Heart right ventricle (tissue), 16 donors: ENCODE measurements at regions of chr9 and their contacts with region 1.

Region 1: GRCh38 chr9:70772601-70773000 is 348.8 kb downstream of the TRPM3 start:
- DNase-seq: no peak
- ATAC-seq: no peak
- H3K4me3 ChIP-seq: no peak overlapping the region
- H3K27ac ChIP-seq: no peak overlapping the region
- H3K4me1 ChIP-seq: no peaks in the 10 kb centered on the region
- H3K27me3 ChIP-seq: no peaks in the 10 kb centered on the region
- CTCF ChIP-seq: no peak

Region 2: DNA sequence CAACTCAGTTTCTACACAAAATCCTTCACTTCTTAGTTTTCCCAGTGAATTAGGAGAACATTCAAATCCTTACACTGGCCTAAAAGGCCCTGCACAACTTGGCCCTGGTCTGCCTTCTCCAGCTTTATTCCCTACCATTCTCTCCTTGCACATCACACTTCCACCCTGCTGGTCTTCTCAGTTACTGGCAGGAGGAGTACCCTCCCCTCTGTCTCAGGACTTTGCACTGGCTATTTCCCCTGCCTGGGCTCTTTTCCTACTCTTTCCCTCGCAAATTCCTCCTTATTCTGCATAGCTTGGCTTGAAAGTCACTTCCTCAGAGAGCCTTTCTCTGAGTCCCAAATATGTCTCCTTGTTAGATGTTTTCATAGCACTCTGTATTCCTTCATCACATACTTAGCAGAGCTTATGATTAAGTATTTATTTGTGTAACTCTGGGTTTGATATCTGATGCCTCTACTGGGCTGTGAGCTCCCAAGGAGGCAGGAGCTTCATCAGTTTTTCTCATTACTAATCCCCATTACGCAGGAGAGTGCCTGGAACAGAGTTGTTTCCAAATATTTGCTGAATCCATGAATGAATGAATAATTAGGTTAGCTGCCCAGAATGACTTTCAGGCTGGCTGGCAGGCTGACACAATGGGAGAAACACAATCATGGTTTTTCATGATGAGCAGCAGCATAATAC is 198.3 kb before region 1 on chr9:
- intact Hi-C with region 1: no loop called
- DNase-seq: no peak
- ATAC-seq: peak; percentile 53 to 86 (median 70)
- H3K4me3 ChIP-seq: no peak overlapping the region
- H3K27ac ChIP-seq: peak overlapping the region in 9 of 10 donors; percentile 11 to 73 (median 47)
- H3K4me1 ChIP-seq: peaks cover 0 to 34% (median 14%) of the 10 kb centered on the region in 9 donors
- H3K27me3 ChIP-seq: no peaks in the 10 kb centered on the region
- CTCF ChIP-seq: no peak

Region 3: GRCh38 chr9:70747261-70747718 is 25.3 kb before region 1 on chr9:
- intact Hi-C with region 1: loop called in 1 of 10 experiments (anchors 1 kb)
- DNase-seq: no peak
- ATAC-seq: no peak
- H3K4me3 ChIP-seq: no peak overlapping the region
- H3K27ac ChIP-seq: no peak overlapping the region
- H3K4me1 ChIP-seq: no peaks in the 10 kb centered on the region
- H3K27me3 ChIP-seq: no peaks in the 10 kb centered on the region
- CTCF ChIP-seq: no peak